Posterior vena cava (tissue), 2 donors: ENCODE measurements at regions of chr5 and their contacts with region 1.

Region 1: GRCh38 chr5:151721087-151721646 is 34.5 kb upstream of the SPARC start:
- DNase-seq: no peak

Region 2: GRCh38 chr5:151699071-151699901 is 21.9 kb before region 1 on chr5:
- intact Hi-C with region 1: loop called in 1 of 2 experiments (anchors 1 kb)
- DNase-seq: peak; percentile 96

Region 3: DNA sequence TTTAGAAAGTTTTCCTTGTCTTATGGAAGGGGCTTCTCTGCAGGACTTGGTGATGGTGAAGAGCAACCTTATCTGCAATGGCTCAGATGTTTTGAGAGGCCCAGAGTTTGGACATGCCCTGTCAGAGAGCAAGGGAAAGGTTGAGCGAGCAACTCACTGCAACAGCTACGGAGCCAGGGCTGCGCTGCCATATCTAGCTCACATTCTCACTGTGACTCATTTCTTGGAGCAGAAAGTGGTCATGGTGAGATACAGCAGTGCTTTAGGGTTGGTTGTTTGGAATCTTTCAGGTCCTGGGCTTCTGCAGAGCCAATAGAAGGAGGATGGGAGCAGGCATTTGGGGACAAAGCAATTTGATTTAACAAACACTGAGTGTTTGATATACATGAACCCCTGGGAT is 191.2 kb after region 1 on chr5:
- intact Hi-C with region 1: no loop called
- DNase-seq: no peak